Right cardiac atrium (tissue), 5 donors: ENCODE measurements at regions of chr15 and their contacts with region 1.

Region 1: DNA sequence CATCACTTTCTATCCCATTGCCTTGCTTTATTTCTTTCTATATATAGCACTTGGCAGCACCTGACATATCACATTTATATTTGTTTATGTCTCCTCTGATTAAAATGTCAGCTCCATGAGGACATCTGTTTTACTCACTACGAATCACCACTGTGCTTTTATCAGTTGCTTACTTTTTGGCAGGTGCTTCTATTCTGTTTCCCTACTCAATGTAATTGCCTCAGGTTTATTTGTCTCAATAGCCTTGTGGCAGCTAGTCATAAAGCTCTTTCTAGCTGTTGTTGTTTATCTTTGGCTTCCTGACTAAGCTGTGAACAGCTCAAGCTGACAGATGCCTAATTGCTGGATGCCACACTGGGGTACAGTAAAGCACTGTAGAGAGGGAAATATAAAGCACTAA is 85.5 kb downstream of the VPS13C start:
- DNase-seq: no peak
- ATAC-seq: no peak
- H3K4me3 ChIP-seq: no peak overlapping the region
- H3K27ac ChIP-seq: no peak overlapping the region
- H3K4me1 ChIP-seq: no peaks in the 10 kb centered on the region
- H3K27me3 ChIP-seq: no peaks in the 10 kb centered on the region

Region 2: GRCh38 chr15:61916104-61916503 is 58.7 kb before region 1 on chr15:
- intact Hi-C with region 1: loop called in 1 of 4 experiments (anchors 10 kb)
- DNase-seq: no peak
- ATAC-seq: peak in 1 of 2 donors; percentile 26
- H3K4me3 ChIP-seq: no peak overlapping the region
- H3K27ac ChIP-seq: no peak overlapping the region
- H3K4me1 ChIP-seq: no peaks in the 10 kb centered on the region
- H3K27me3 ChIP-seq: no peaks in the 10 kb centered on the region

Region 3: DNA sequence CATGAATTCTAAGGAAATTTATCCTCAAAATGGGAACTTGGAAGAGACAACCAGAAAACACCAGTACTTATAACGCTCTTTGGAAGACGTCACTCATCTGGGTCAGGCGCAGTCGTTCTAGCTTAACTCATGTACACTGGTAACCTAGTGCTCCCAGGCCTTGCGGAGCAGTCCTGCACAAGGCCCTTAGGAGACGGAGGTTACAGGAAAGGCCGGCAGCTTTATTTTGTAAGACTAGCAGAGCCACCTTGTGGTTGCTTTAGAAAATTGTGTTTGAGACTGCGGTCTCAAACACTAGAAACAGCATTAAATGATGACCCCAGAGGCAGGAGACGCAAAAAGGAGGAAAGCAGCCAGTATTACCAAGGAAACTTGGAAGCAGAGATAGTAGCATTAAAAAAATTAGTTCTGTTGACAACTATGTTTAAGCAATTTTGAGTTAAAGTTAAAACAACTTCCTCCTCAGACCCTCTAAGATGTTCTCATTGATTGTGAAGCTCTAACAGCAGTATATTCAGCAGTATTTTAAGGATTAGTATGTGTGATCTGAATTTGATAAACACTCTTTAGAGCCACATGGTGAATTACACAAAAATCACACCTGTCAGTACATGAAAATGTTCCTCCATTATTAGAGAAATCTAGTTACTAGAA is 332.2 kb after region 1 on chr15:
- intact Hi-C with region 1: no loop called
- DNase-seq: peak; percentile 52 to 74 (median 59)
- ATAC-seq: peak; percentile 90 to 95
- H3K4me3 ChIP-seq: no peak overlapping the region
- H3K27ac ChIP-seq: no peak overlapping the region
- H3K4me1 ChIP-seq: no peaks in the 10 kb centered on the region
- H3K27me3 ChIP-seq: no peaks in the 10 kb centered on the region